GM12878 (cell line): ENCODE measurements at regions of chrX and their contacts with region 1.

Region 1: GRCh38 chrX:79259073-79259689 is 108.0 kb downstream of the ITM2A start:
- DNase-seq: peak; percentile 99
- ATAC-seq: peak; percentile 89
- H3K4me3 ChIP-seq: peak overlapping the region; percentile 30; the same call in 1 of the 2 replicates
- H3K27ac ChIP-seq: peak overlapping the region; percentile 87
- H3K4me1 ChIP-seq: peaks cover 21% of the 10 kb centered on the region; the same call in 1 of the 2 replicates
- H3K27me3 ChIP-seq: no peaks in the 10 kb centered on the region
- CTCF ChIP-seq: no peak
- EP300 ChIP-seq: peak; percentile 79 to 84; a peak in 3 of 4 replicates
- POLR2A ChIP-seq: no peak
- RAD21 ChIP-seq: peak; percentile 20; the same call in 1 of the 2 replicates

Region 2: DNA sequence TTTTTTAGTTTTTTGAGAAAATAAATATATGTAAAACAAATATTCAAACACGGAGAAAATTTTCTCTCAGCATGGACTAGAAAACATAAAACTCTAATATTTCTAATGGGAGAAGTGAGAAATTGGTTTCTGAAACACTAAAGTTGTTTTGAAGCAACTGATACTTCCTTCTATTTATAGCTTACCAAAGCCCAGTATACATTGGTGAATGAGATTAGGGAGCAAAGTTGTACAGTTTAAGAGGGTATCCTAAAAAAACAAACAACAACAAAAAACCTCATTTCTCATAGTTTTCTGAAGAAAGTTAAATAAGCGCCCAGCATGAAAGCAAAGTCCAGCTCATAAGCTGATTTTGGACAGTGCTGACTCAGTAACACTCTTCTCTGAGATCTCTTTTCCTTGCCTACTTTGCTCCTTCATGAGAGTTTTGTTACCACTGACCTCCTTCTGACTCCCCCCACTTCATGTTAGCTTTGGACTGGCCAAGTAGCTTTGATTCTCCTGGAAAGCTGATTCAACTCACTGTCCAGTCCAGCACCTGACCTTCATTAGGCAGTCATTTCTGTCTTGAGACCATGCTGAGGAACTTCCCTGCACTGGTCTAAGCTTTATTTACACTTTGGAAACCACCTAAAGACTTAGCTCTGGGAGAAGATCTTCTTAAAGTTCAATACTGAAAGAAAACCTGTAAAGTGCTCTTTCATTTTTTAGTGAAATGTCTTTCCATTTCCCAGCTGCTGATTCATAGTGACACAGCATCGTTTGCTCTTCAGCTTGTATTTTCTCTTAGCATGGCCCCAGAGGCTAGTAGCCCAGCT is 335.8 kb before region 1 on chrX:
- CTCF ChIA-PET with region 1: interaction called, 4 read pairs
- POLR2A ChIA-PET with region 1: no interaction called
- RAD21 ChIA-PET with region 1: interaction called, 9 read pairs
- SMC1A ChIA-PET with region 1: interaction called, 10 read pairs
- in situ Hi-C with region 1: no loop called
- intact Hi-C with region 1: no loop called
- DNase-seq: peak; percentile 87
- ATAC-seq: peak; percentile 95
- H3K4me3 ChIP-seq: peak overlapping the region; percentile 49
- H3K27ac ChIP-seq: peak overlapping the region; percentile 99
- H3K4me1 ChIP-seq: peaks cover 9% of the 10 kb centered on the region
- H3K27me3 ChIP-seq: no peaks in the 10 kb centered on the region
- CTCF ChIP-seq: no peak
- EP300 ChIP-seq: peak; percentile 68 to 72; a peak in 2 of 4 replicates
- POLR2A ChIP-seq: no peak; the same call in 1 of the 2 replicates
- RAD21 ChIP-seq: 0 out of 2 replicates have a peak, but pooled peaks have one; percentile 3

Region 3: GRCh38 chrX:78989349-78989748 is 269.8 kb before region 1 on chrX:
- CTCF ChIA-PET with region 1: no interaction called
- POLR2A ChIA-PET with region 1: no interaction called
- RAD21 ChIA-PET with region 1: no interaction called
- SMC1A ChIA-PET with region 1: no interaction called
- in situ Hi-C with region 1: no loop called
- intact Hi-C with region 1: no loop called
- DNase-seq: no peak
- ATAC-seq: no peak
- H3K4me3 ChIP-seq: no peak overlapping the region
- H3K27ac ChIP-seq: no peak overlapping the region
- H3K4me1 ChIP-seq: peaks cover 5% of the 10 kb centered on the region; the same call in 1 of the 2 replicates
- H3K27me3 ChIP-seq: no peaks in the 10 kb centered on the region
- CTCF ChIP-seq: no peak
- EP300 ChIP-seq: no peak
- POLR2A ChIP-seq: no peak
- RAD21 ChIP-seq: no peak

Region 4: DNA sequence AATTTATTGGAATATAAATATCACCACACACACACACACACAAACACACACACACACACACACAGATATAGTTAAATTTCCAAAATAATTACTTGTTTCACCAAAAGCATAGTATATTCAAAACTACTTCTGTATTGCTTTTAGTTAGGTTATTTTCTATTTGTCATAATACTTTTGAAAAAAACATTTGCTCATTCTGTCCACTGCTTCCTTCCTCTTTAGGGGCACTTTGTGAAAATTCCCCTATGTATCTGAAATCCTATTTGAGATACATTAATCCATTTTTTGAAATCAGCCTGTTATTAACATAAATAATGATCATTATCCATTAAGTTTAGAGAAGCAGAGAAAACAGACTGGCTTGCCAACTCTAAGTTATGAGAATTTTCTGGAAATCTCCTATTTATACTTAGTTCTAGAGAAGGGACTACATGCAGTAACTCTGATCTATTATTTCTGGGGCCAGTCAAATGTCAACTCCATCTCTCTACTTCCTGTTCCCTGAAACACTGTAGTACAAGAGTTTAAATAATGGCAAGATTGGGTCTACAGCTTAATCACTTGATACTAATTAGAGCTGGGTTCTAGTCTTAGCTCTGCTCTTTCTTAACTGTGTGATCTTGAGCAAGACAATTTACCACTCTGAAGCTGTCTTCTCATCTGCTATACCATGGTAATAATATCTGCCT is 169.1 kb before region 1 on chrX:
- CTCF ChIA-PET with region 1: no interaction called
- POLR2A ChIA-PET with region 1: no interaction called
- RAD21 ChIA-PET with region 1: interaction called, 3 read pairs
- SMC1A ChIA-PET with region 1: interaction called, 9 read pairs
- in situ Hi-C with region 1: loop called (anchors 5 kb)
- intact Hi-C with region 1: no loop called
- DNase-seq: no peak
- ATAC-seq: peak; percentile 74
- H3K4me3 ChIP-seq: no peak overlapping the region
- H3K27ac ChIP-seq: no peak overlapping the region
- H3K4me1 ChIP-seq: no peaks in the 10 kb centered on the region
- H3K27me3 ChIP-seq: no peaks in the 10 kb centered on the region
- CTCF ChIP-seq: no peak
- EP300 ChIP-seq: no peak
- POLR2A ChIP-seq: no peak
- RAD21 ChIP-seq: no peak

Region 5: GRCh38 chrX:79138658-79139241 is 120.4 kb before region 1 on chrX:
- CTCF ChIA-PET with region 1: no interaction called
- POLR2A ChIA-PET with region 1: interaction called, 8 read pairs
- RAD21 ChIA-PET with region 1: interaction called, 22 read pairs
- SMC1A ChIA-PET with region 1: interaction called, 41 read pairs
- in situ Hi-C with region 1: no loop called
- intact Hi-C with region 1: loop called (anchors 2 kb)
- DNase-seq: peak; percentile 79
- ATAC-seq: peak; percentile 95
- H3K4me3 ChIP-seq: no peak overlapping the region
- H3K27ac ChIP-seq: peak overlapping the region; percentile 84
- H3K4me1 ChIP-seq: peaks cover 10% of the 10 kb centered on the region; the same call in 1 of the 2 replicates
- H3K27me3 ChIP-seq: no peaks in the 10 kb centered on the region
- CTCF ChIP-seq: no peak
- EP300 ChIP-seq: peak; percentile 78 to 83; a peak in 2 of 4 replicates
- POLR2A ChIP-seq: no peak
- RAD21 ChIP-seq: no peak

Region 6: DNA sequence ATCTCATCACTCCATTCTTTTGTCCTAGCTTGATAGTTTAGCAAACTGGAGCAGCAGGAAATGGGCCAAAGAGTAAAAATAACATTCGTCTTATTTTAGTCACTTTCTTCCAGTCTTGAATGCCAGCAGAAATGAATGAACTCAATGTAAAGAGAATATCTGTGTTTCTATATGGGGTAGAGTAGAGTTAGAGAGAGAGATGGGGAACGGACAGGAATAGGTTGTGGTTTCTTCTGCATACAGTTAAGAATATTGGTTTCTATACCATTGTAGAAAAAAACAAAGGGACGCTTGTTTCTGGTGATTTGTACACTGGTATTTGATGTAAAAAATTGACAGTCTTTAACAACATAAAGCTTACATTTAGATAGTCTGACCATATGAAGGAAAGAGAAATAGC is 105.8 kb before region 1 on chrX:
- CTCF ChIA-PET with region 1: interaction called, 3 read pairs
- POLR2A ChIA-PET with region 1: interaction called, 4 read pairs
- RAD21 ChIA-PET with region 1: interaction called, 22 read pairs
- SMC1A ChIA-PET with region 1: interaction called, 24 read pairs
- in situ Hi-C with region 1: no loop called
- intact Hi-C with region 1: no loop called
- DNase-seq: no peak
- ATAC-seq: peak; percentile 48
- H3K4me3 ChIP-seq: no peak overlapping the region
- H3K27ac ChIP-seq: peak overlapping the region; percentile 8; the same call in 1 of the 2 replicates
- H3K4me1 ChIP-seq: peaks cover 2% of the 10 kb centered on the region; the same call in 1 of the 2 replicates
- H3K27me3 ChIP-seq: no peaks in the 10 kb centered on the region
- CTCF ChIP-seq: no peak
- EP300 ChIP-seq: no peak
- POLR2A ChIP-seq: no peak
- RAD21 ChIP-seq: no peak

Region 7: GRCh38 chrX:79167462-79167861 is 91.7 kb before region 1 on chrX:
- CTCF ChIA-PET with region 1: interaction called, 6 read pairs
- POLR2A ChIA-PET with region 1: interaction called, 12 read pairs
- RAD21 ChIA-PET with region 1: interaction called, 21 read pairs
- SMC1A ChIA-PET with region 1: interaction called, 32 read pairs
- in situ Hi-C with region 1: no loop called
- intact Hi-C with region 1: loop called (anchors 5 kb)
- DNase-seq: no peak
- ATAC-seq: peak; percentile 24; the same call in 2 of the 3 replicates
- H3K4me3 ChIP-seq: no peak overlapping the region
- H3K27ac ChIP-seq: no peak overlapping the region
- H3K4me1 ChIP-seq: peaks cover 7% of the 10 kb centered on the region
- H3K27me3 ChIP-seq: no peaks in the 10 kb centered on the region
- CTCF ChIP-seq: no peak
- EP300 ChIP-seq: no peak
- POLR2A ChIP-seq: no peak
- RAD21 ChIP-seq: no peak

Region 8: GRCh38 chrX:79235899-79236298 is 23.3 kb before region 1 on chrX:
- CTCF ChIA-PET with region 1: no interaction called
- POLR2A ChIA-PET with region 1: no interaction called
- RAD21 ChIA-PET with region 1: no interaction called
- SMC1A ChIA-PET with region 1: no interaction called
- in situ Hi-C with region 1: no loop called
- intact Hi-C with region 1: no loop called
- DNase-seq: no peak
- ATAC-seq: no peak
- H3K4me3 ChIP-seq: no peak overlapping the region
- H3K27ac ChIP-seq: no peak overlapping the region
- H3K4me1 ChIP-seq: no peaks in the 10 kb centered on the region
- H3K27me3 ChIP-seq: no peaks in the 10 kb centered on the region; a peak in 1 of 4 replicates
- CTCF ChIP-seq: no peak
- EP300 ChIP-seq: no peak
- POLR2A ChIP-seq: no peak
- RAD21 ChIP-seq: no peak

Region 9: GRCh38 chrX:79270401-79270800 is 11.2 kb after region 1 on chrX:
- CTCF ChIA-PET with region 1: interaction called, 11 read pairs
- POLR2A ChIA-PET with region 1: no interaction called
- RAD21 ChIA-PET with region 1: interaction called, 30 read pairs
- SMC1A ChIA-PET with region 1: interaction called, 25 read pairs
- in situ Hi-C with region 1: no loop called
- intact Hi-C with region 1: loop called (anchors 1 kb)
- DNase-seq: peak; percentile 63
- ATAC-seq: peak; percentile 99
- H3K4me3 ChIP-seq: no peak overlapping the region
- H3K27ac ChIP-seq: no peak overlapping the region
- H3K4me1 ChIP-seq: no peaks in the 10 kb centered on the region
- H3K27me3 ChIP-seq: no peaks in the 10 kb centered on the region
- CTCF ChIP-seq: peak; percentile 74 to 91 (median 74); a peak in 5 of 6 replicates
- EP300 ChIP-seq: no peak
- POLR2A ChIP-seq: no peak
- RAD21 ChIP-seq: peak; percentile 97

Region 10: DNA sequence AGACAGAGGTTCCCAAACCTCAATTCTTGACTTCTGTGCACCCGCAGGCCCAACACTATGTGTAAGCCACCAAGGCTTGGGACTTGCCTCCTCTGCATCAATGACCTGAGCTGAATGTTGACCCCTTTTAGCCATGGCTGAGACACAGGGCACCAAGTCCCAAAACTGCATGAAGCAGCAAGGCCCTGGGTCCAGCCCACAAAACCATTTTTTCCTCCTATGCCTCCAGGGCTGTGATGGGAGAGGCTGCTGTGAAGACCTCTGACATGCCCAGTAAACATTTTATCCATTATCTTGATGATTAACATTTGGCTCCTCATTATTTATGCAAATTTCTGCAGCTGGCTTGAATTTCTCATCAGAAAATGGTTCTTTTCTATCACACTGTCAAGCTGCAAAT is 22.6 kb after region 1 on chrX:
- CTCF ChIA-PET with region 1: no interaction called
- POLR2A ChIA-PET with region 1: no interaction called
- RAD21 ChIA-PET with region 1: no interaction called
- SMC1A ChIA-PET with region 1: no interaction called
- in situ Hi-C with region 1: no loop called
- intact Hi-C with region 1: no loop called
- DNase-seq: no peak
- ATAC-seq: no peak
- H3K4me3 ChIP-seq: no peak overlapping the region
- H3K27ac ChIP-seq: no peak overlapping the region
- H3K4me1 ChIP-seq: no peaks in the 10 kb centered on the region
- H3K27me3 ChIP-seq: no peaks in the 10 kb centered on the region
- CTCF ChIP-seq: no peak
- EP300 ChIP-seq: no peak
- POLR2A ChIP-seq: no peak
- RAD21 ChIP-seq: no peak